ENCODE measurements at regions of chr2 and their contacts with region 1.

Region 1: DNA sequence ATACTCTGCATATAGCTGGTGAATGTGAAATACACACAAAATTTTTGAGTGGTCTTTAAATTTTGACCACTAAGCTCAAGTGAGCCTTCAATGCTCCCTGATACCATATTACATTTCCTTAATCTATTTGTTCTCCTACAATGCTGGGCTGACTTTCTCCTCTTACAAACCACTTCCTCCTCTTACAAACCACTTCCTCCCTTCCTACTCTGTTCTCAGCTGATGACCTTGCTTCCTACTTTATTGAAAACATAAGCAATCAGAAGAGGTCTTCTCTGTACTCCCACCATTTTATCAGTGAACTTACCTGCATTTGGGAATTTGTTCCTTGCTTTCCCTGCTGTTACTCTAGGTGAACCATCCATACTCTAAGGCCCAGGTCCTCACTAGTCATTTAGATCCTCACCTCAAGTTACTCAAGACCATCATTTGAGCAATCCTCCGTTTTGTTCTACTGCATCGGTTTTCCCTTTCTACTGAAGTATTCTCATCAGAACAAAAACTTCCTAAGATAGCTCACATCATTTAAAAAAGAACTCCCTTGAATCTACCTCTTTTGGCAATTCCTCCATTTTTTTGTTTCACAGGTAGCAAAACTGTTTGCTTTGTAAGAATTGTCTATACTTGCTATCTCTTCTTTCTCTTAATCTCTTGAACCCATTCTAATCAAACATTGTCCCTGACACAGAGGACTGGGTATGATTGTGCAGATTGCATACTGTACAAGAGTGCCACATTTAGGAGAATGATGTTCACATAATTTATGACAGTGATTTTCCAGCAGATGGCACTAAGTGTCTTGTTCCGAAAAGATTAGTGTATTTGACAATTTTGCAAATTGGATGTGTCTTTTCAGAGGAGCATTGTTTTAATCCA is 96.5 kb downstream of the EPB41L5 start:
- DNase-seq: no peak
- ATAC-seq: peak; percentile 64

Region 2: DNA sequence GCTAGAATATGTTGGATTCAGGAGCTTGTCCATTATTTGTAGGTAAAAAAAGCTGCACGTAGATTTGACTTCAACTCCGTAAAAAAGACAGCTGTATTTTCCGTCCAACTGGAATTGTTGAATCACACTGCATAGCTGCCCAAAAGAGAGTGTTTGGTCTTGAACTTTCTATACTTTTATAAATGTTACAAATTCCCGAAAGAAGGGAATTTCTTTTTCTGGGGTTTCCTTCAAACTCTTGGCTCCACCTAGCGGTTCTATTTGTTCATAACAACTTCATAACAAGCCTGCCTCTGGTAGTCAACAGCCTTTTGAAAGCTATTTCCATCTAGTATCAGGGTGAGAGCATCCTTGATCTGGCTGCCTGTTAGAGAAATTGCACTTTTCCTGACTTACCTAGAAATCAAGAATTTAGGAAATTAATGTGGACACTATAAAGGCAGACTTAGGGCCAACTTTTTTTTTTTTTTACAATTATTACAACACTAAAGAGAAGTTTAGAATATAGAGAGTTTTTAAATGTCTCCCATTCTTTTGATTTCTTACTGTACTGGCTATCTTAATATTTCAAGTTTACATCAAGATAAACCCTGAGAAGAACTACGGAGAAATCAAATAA is 65.6 kb after region 1 on chr2:
- intact Hi-C with region 1: loop called (anchors 10 kb)
- DNase-seq: no peak
- ATAC-seq: peak; percentile 61

Region 3: DNA sequence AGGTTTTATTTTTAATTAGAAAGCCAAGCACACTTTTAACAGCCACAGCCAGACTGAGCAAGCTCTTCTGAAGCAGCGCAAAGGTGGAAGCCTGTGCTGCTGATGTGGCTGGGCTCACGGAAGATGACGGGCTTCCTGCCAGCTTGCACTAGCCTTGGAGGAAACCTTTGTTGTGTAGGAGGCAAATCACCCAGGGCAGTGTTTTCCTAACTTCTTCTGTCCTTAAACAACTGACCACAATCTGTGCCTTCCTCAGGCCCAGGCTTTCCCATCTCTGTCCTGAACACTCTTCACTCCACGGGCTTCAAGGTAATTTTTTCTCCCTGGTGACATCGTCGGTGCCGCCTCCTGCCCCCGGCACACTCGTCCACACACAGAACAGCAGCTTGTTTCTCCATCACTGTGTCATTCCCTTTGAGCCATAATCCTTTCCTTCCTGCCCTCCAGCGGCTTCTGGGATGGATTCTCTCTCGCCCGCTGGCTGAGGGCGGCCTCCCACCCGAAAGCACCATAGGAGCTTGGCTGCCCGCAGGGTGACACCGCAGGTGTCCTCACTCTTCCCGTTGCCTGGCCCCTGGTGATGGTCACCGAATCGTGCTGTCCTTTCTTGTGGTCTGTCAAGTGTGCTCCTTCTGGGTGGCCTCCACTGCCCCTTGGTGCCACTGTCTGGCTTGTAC is 205.4 kb after region 1 on chr2:
- intact Hi-C with region 1: loop called (anchors 5 kb)
- DNase-seq: no peak
- ATAC-seq: no peak